CD8-positive, alpha-beta memory T cell (primary cell): ENCODE measurements at regions of chr15 and their contacts with region 1.

Region 1: DNA sequence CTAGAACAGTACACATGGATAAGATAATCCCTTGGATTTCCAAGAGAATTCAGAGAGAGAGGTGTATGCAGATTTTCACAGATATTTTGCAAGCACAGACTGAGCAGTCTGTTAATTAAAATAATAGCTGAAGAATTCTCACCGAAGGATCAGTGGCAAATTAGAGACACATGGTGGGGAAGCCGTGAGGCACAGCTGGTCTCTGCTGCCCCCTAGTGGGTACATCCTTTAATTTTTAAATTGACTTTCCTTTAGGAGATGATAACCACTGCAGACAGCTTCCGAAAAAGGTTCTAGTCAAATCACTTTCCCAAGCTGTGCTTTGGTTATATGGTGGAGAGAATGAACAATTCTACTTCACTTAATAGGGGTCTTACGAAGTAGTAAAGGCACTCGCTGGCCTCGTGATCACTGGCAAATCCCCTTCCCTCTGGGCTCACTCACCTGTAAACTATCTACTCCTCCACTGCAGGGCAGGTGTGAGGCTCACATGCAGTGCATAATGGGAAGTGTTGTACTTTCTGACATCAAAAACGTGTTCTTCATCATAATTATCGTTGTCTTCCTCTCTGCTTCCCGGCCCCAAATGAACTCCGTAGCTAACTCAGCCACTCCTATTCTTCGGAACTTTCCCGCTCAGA is 19.5 kb downstream of the MESD start:
- DNase-seq: peak; percentile 34 to 60 (median 42)
- H3K4me3 ChIP-seq: no peak overlapping the region
- H3K4me3 Mint-ChIP-seq: no peak overlapping the region
- H3K27ac ChIP-seq: no peak overlapping the region
- H3K27ac Mint-ChIP-seq: peak overlapping the region in 5 of 8 donors; percentile 26 to 59 (median 36)
- H3K4me1 ChIP-seq: no peaks in the 10 kb centered on the region
- H3K4me1 Mint-ChIP-seq: peaks cover 16 to 18% (median 17%) of the 10 kb centered on the region in 3 donors
- H3K27me3 ChIP-seq: no peaks in the 10 kb centered on the region
- H3K27me3 Mint-ChIP-seq: peaks cover 0 to 3% of the 10 kb centered on the region in 2 donors

Region 2: DNA sequence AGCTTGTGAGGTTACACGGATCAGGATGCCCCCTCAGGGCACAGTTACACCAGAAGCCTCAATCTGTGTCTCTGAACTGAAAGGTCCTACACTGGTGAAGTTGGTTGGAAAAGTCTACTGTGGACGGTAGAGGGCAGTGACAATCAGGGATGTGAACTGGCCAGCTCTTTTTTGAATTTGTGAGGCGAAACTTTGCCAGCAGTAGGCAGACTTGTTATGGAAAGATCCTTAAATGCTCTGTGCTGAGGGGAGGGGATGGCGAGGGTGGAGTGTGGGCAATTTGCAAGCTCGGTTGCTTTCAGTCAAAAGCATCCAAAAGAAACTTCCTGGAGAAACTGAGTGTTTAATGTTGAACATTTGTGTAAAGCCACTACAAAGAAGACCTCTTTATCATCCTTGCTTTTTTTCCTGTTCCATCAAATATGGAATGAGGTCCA is 402.4 kb before region 1 on chr15:
- CTCF ChIA-PET with region 1: interaction called, 10 read pairs
- POLR2A ChIA-PET with region 1: no interaction called
- DNase-seq: peak in 1 of 5 donors; percentile 3
- H3K4me3 ChIP-seq: no peak overlapping the region
- H3K4me3 Mint-ChIP-seq: no peak overlapping the region
- H3K27ac ChIP-seq: no peak overlapping the region
- H3K27ac Mint-ChIP-seq: peak overlapping the region in 1 of 8 donors; percentile 0
- H3K4me1 ChIP-seq: no peaks in the 10 kb centered on the region
- H3K4me1 Mint-ChIP-seq: no peaks in the 10 kb centered on the region
- H3K27me3 ChIP-seq: peaks cover 3% of the 10 kb centered on the region
- H3K27me3 Mint-ChIP-seq: peaks cover 16 to 40% of the 10 kb centered on the region in 2 donors

Region 3: GRCh38 chr15:80989518-80990478 is 19.7 kb after region 1 on chr15 and contains the start of gene MESD:
- CTCF ChIA-PET with region 1: interaction called, 13 read pairs
- POLR2A ChIA-PET with region 1: no interaction called
- DNase-seq: peak; percentile 93 to 97 (median 97)
- H3K4me3 ChIP-seq: peak within 1 kb of the TSS; percentile 72
- H3K4me3 Mint-ChIP-seq: peak within 1 kb of the TSS; percentile 97 to 99 (median 98)
- H3K27ac ChIP-seq: peak within 1 kb of the TSS; percentile 88
- H3K27ac Mint-ChIP-seq: peak within 1 kb of the TSS; percentile 91 to 99 (median 99)
- H3K4me1 ChIP-seq: peaks cover 61% of the 10 kb centered on the region
- H3K4me1 Mint-ChIP-seq: peaks cover 44 to 61% (median 57%) of the 10 kb centered on the region in 3 donors
- H3K27me3 ChIP-seq: no peaks in the 10 kb centered on the region
- H3K27me3 Mint-ChIP-seq: no peaks in the 10 kb centered on the region
- total RNA-seq, gene MESD: 25.7 to 30.5 TPM